ENCODE measurements at regions of chr2 and their contacts with region 1.

Region 1: DNA sequence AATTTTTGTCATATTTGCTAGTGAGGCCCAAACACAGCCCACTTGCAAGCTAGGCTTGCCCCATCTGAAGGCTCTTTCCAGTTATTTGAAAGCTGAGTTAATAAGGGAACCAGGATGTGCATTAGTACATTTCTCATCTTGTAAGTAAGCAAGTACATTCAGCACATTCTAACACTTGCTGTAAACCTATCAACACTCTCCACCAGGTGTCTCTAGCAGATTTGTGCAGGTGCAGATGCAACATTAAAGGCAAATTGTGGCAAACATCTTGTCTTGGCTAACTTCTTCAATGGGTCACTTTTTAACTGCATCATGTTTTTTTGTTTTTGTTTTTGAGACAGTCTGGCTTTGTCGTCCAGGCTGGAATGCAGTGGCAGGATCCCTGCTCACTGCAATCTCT is 25.3 kb upstream of the MFSD6 start:
- DNase-seq: peak; percentile 50
- H3K4me3 Mint-ChIP-seq: no peak overlapping the region
- H3K27ac Mint-ChIP-seq: no peak overlapping the region
- H3K4me1 Mint-ChIP-seq: no peaks in the 10 kb centered on the region
- H3K27me3 Mint-ChIP-seq: no peaks in the 10 kb centered on the region
- CTCF ChIP-seq: peak; percentile 42

Region 2: DNA sequence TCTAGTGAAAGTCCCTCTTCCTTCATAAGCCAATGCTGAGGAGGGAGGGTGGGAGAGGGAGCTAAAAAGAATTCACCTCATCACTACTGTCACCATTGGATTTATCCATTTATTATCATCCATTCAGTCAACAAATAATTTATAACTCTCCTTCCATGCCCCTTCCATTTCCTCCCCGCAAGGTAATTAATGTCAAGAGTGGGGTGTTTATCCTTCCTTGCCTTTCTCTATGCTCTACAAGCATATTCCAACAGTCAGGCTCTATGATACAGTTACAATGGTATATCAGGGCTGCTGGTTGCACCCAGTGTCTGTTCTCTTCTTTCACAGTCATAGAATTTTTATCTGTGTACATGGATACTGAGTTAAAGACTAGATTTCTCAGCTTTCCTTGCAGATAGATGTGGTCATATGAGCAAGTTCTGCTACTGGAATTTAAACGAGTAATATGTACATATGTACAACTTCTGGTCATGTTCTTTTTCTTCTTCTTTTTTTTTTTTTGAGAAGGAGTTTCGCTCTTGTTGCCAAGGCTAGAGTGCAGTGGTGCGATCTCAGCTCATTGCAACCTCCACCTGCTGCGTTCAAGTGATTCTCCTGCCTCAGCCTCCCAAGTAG is 20.2 kb after region 1 on chr2:
- CTCF ChIA-PET with region 1: no interaction called
- intact Hi-C with region 1: no loop called
- DNase-seq: no peak
- H3K4me3 Mint-ChIP-seq: no peak overlapping the region
- H3K27ac Mint-ChIP-seq: no peak overlapping the region
- H3K4me1 Mint-ChIP-seq: no peaks in the 10 kb centered on the region
- H3K27me3 Mint-ChIP-seq: no peaks in the 10 kb centered on the region
- CTCF ChIP-seq: no peak

Region 3: DNA sequence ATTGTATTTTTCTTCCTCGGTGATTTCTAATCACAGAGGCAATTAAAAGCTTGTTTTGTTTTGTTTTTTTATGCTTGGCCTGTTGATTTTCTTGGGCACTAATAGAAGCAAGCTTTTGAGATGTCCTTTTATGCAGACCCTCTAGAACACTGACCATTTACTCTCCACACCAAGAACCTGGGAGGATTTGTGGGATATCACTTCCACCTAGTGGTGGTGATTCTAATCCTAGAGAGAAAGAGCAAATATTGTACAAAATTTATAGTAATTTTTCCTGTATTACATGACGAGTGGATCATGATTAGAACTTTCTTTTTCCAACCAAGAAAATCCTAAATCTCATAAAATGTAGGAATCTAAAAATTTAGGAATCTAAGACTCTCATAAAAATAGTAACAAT is 128.3 kb after region 1 on chr2:
- CTCF ChIA-PET with region 1: no interaction called
- intact Hi-C with region 1: loop called (anchors 1 kb)
- DNase-seq: peak; percentile 32
- H3K4me3 Mint-ChIP-seq: no peak overlapping the region
- H3K27ac Mint-ChIP-seq: no peak overlapping the region
- H3K4me1 Mint-ChIP-seq: peaks cover 12% of the 10 kb centered on the region
- H3K27me3 Mint-ChIP-seq: no peaks in the 10 kb centered on the region
- CTCF ChIP-seq: peak; percentile 37

Region 4: GRCh38 chr2:190679813-190680591 is 297.2 kb after region 1 on chr2:
- CTCF ChIA-PET with region 1: no interaction called
- intact Hi-C with region 1: loop called (anchors 1 kb)
- DNase-seq: peak; percentile 69
- H3K4me3 Mint-ChIP-seq: no peak overlapping the region
- H3K27ac Mint-ChIP-seq: peak overlapping the region; percentile 24
- H3K4me1 Mint-ChIP-seq: peaks cover 13% of the 10 kb centered on the region
- H3K27me3 Mint-ChIP-seq: no peaks in the 10 kb centered on the region
- CTCF ChIP-seq: peak; percentile 51